Upper lobe of right lung (tissue), 1 donor: ENCODE measurements at regions of chr20 and their contacts with region 1.

Region 1: GRCh38 chr20:25676164-25676806 is 20.4 kb downstream of the ZNF337 start:
- DNase-seq: no peak
- ATAC-seq: peak; percentile 40
- H3K4me3 ChIP-seq: no peak overlapping the region
- H3K27ac ChIP-seq: no peak overlapping the region
- H3K4me1 ChIP-seq: no peaks in the 10 kb centered on the region
- H3K27me3 ChIP-seq: no peaks in the 10 kb centered on the region
- CTCF ChIP-seq: no peak

Region 2: DNA sequence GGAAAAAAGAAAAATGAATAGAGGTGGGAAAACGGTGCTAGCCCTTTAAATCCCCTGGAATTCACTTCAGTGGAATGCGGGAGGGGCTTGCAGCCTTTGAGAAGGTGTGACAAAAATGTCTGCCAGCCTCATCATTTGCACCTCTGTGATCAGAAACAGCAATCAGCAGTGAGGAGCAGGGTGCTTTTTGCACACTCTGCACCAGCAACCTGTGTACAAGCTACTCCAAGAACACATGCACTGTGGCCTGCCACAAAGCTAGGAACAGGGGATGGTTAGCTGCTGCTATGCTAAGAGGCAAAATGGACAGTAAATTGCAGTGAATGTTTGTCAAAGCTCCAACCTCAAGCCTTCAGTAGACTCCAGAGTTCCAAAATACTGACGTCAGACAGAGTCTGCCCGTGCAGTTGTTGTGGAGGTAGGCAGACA is 239.1 kb before region 1 on chr20:
- intact Hi-C with region 1: no loop called
- DNase-seq: no peak
- ATAC-seq: peak; percentile 65
- H3K4me3 ChIP-seq: no peak overlapping the region
- H3K27ac ChIP-seq: no peak overlapping the region
- H3K4me1 ChIP-seq: no peaks in the 10 kb centered on the region
- H3K27me3 ChIP-seq: no peaks in the 10 kb centered on the region
- CTCF ChIP-seq: no peak

Region 3: GRCh38 chr20:25629816-25630499 is 46.3 kb before region 1 on chr20:
- intact Hi-C with region 1: loop called (anchors 5 kb)
- DNase-seq: no peak
- ATAC-seq: no peak
- H3K4me3 ChIP-seq: no peak overlapping the region
- H3K27ac ChIP-seq: no peak overlapping the region
- H3K4me1 ChIP-seq: peaks cover 1% of the 10 kb centered on the region
- H3K27me3 ChIP-seq: no peaks in the 10 kb centered on the region
- CTCF ChIP-seq: no peak